Natural killer cell (primary cell): ENCODE measurements at regions of chr17 and their contacts with region 1.

Region 1: DNA sequence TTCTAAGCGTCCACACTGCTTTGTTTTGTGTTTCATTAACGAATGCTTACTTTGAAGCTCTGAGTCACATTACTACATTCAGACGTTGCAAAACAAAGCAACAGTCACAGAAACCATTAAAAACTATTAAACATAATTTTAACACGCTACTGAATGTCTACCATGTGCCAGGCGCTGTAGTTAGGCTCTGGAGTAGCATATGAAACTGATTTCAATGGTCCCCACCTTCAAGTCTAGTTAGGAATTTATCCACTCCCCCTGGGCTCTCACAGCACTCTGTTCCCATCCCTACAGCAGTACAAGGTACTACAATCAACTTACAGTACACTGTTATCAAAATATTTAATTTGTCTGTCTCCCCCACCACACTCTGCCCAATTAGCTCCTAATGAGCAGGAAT is 631 bp downstream of the UTP6 start:
- DNase-seq: no peak
- ATAC-seq: no peak
- H3K4me3 ChIP-seq: peak overlapping the region; percentile 93
- H3K4me3 Mint-ChIP-seq: no peak overlapping the region
- H3K27ac ChIP-seq: peak overlapping the region; percentile 61
- H3K27ac Mint-ChIP-seq: no peak overlapping the region
- H3K4me1 ChIP-seq: peaks cover 10% of the 10 kb centered on the region
- H3K4me1 Mint-ChIP-seq: peaks cover 0 to 4% of the 10 kb centered on the region in 2 donors
- H3K27me3 ChIP-seq: no peaks in the 10 kb centered on the region
- H3K27me3 Mint-ChIP-seq: no peaks in the 10 kb centered on the region
- CTCF ChIP-seq: no peak

Region 2: GRCh38 chr17:31859474-31860008 is 41.3 kb before region 1 on chr17:
- intact Hi-C with region 1: loop called (anchors 1 kb)
- DNase-seq: peak in 1 of 2 donors; percentile 14
- ATAC-seq: no peak
- H3K4me3 ChIP-seq: peak overlapping the region; percentile 35
- H3K4me3 Mint-ChIP-seq: peak overlapping the region; percentile 91
- H3K27ac ChIP-seq: no peak overlapping the region
- H3K27ac Mint-ChIP-seq: peak overlapping the region in 1 of 2 donors; percentile 63
- H3K4me1 ChIP-seq: peaks cover 14% of the 10 kb centered on the region
- H3K4me1 Mint-ChIP-seq: peaks cover 14 to 15% of the 10 kb centered on the region in 2 donors
- H3K27me3 ChIP-seq: no peaks in the 10 kb centered on the region
- H3K27me3 Mint-ChIP-seq: no peaks in the 10 kb centered on the region
- CTCF ChIP-seq: no peak

Region 3: DNA sequence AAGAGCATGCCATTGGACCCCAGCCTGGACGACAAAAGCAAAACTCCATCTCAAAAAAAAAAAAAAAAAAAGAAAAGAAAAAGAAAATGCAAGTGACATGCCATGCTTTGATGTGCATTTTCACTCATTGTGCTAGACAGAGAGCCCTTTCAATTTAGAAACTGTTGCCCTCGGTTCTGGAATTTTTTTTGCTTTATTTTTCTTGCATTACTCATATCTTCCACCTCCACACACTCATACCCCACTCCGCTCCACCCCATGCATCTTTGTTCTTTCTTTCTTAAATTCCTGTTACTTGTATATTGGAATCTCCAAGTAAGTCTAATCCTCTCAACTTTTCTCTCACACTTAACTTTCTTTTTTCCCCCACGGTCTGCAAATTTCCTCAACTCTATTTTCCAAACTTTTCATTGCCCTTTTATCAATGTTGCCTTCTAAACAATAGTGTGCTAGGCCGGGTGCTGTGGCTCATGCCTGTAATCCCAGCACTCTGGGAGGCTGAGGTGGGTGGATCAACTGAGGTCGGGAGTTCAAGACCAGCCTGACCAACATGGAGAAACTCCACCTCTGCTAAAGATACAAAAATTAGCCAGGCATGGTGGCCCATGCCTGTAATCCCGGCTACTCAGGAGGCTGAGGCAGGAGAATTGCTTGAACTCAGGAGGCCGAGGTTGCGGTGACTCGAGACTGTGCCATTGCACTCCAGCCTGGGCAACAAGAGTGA is 19.1 kb after region 1 on chr17:
- intact Hi-C with region 1: no loop called
- DNase-seq: no peak
- ATAC-seq: no peak
- H3K4me3 ChIP-seq: no peak overlapping the region
- H3K4me3 Mint-ChIP-seq: no peak overlapping the region
- H3K27ac ChIP-seq: no peak overlapping the region
- H3K27ac Mint-ChIP-seq: no peak overlapping the region
- H3K4me1 ChIP-seq: no peaks in the 10 kb centered on the region
- H3K4me1 Mint-ChIP-seq: no peaks in the 10 kb centered on the region
- H3K27me3 ChIP-seq: no peaks in the 10 kb centered on the region
- H3K27me3 Mint-ChIP-seq: peaks cover 17 to 24% of the 10 kb centered on the region in 2 donors
- CTCF ChIP-seq: no peak

Region 4: DNA sequence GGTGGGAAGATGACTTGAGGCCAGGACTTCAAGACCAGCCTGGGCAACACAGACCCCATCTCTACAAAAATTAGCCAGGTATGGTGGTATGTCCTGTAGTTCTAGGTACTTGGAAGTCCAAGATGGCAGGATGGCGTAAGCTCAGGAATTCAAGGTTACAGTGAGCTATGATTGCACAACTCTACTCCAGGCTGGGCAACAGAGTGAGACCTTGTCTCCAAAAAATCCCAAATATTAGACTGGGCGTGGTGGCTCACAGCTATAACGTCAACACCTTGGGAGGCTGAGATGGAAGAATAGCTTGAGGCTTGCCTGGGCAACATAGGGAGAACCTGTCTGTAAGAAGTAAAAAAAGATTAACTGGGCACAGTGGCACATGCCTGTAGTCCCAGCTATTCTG is 66.8 kb after region 1 on chr17:
- intact Hi-C with region 1: no loop called
- DNase-seq: no peak
- ATAC-seq: no peak
- H3K4me3 ChIP-seq: no peak overlapping the region
- H3K4me3 Mint-ChIP-seq: no peak overlapping the region
- H3K27ac ChIP-seq: no peak overlapping the region
- H3K27ac Mint-ChIP-seq: no peak overlapping the region
- H3K4me1 ChIP-seq: no peaks in the 10 kb centered on the region
- H3K4me1 Mint-ChIP-seq: peaks cover 0 to 11% of the 10 kb centered on the region in 2 donors
- H3K27me3 ChIP-seq: no peaks in the 10 kb centered on the region
- H3K27me3 Mint-ChIP-seq: no peaks in the 10 kb centered on the region
- CTCF ChIP-seq: no peak

Region 5: GRCh38 chr17:32033223-32033622 is 132.3 kb after region 1 on chr17:
- intact Hi-C with region 1: no loop called
- DNase-seq: no peak
- ATAC-seq: no peak
- H3K4me3 ChIP-seq: no peak overlapping the region
- H3K4me3 Mint-ChIP-seq: no peak overlapping the region
- H3K27ac ChIP-seq: no peak overlapping the region
- H3K27ac Mint-ChIP-seq: no peak overlapping the region
- H3K4me1 ChIP-seq: no peaks in the 10 kb centered on the region
- H3K4me1 Mint-ChIP-seq: no peaks in the 10 kb centered on the region
- H3K27me3 ChIP-seq: no peaks in the 10 kb centered on the region
- H3K27me3 Mint-ChIP-seq: no peaks in the 10 kb centered on the region
- CTCF ChIP-seq: no peak